B cell (primary cell): ENCODE measurements at regions of chr2 and their contacts with region 1.

Region 1: DNA sequence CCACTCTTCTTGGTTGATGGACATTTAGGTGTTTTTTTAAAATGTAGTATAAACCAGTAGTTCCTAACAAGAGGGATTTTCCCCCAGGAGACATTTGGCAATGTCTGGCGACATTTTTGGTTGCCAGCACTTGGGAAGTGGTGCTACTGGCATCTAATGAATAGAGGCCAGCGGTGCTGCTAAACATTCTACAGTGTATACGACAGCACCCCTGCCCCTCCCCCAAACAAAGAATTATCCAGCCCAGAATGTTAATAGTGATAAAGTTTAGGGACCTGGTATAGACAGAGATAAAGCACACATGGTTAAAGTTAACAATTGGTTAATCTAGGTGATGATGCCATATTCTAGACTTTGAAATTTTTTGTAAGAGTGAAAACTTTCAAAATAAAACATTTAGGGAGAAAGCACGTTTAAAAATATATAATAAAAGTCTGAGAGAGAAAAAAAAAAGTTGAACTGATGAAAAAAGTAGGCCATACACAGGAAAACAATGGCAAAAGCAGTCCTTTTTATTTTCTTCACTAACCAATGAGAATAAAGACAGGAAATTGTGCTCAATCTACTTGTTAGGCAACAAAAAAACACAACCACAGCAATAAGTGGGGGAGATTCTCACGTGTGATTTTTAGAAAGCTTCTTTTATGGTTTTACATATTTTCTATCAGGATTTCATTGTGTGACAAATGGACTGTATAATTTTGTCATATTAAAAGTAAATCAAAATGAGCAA is 14.8 kb downstream of the FBXO48 start:
- DNase-seq: peak; percentile 13
- ATAC-seq: peak; percentile 24
- H3K4me3 ChIP-seq: no peak overlapping the region
- H3K4me3 Mint-ChIP-seq: no peak overlapping the region
- H3K27ac ChIP-seq: no peak overlapping the region
- H3K27ac Mint-ChIP-seq: no peak overlapping the region
- H3K4me1 ChIP-seq: no peaks in the 10 kb centered on the region
- H3K4me1 Mint-ChIP-seq: no peaks in the 10 kb centered on the region
- H3K27me3 ChIP-seq: no peaks in the 10 kb centered on the region
- H3K27me3 Mint-ChIP-seq: no peaks in the 10 kb centered on the region
- CTCF ChIP-seq: no peak

Region 2: DNA sequence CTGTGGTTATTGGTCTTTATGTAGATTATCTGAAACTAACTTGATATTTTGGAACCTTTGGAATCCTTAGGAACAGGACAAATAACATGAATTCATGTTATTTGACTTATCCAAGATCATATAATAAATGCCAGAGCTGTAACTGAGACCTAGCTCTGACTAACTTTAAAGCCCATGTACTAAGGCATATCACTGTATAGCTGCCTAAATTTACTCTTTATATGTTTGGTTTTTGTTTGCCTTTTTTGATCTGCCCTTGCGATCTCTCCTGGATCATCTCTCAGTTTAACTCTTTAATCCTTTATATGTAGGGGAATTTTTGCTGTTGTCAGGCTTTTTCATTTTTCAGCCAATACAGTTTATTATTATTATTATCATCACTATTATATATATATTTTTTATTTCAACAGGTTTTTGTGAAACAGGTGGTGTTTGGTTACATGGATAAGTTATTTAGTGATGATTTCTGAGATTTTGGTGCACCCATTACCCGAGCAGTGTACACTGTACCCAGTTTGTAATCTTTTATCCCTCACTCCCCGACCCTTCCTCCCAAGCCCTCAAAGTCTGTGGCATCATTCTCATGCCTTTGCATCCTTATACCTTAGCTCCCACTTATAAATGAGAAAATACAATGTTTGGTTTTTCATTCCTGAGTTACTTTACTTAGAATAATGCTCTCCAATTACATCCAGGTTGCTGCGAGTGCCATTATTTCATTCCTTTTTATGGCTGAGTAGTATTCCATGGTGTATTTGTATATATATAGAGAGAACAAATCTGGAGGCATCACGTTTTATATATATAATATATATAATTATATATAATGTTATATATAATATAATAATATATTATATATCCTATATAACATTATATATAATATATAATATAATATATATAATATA is 64.0 kb after region 1 on chr2:
- CTCF ChIA-PET with region 1: no interaction called
- POLR2A ChIA-PET with region 1: no interaction called
- intact Hi-C with region 1: loop called (anchors 5 kb)
- DNase-seq: no peak
- ATAC-seq: no peak
- H3K4me3 ChIP-seq: no peak overlapping the region
- H3K4me3 Mint-ChIP-seq: no peak overlapping the region
- H3K27ac ChIP-seq: no peak overlapping the region
- H3K27ac Mint-ChIP-seq: no peak overlapping the region
- H3K4me1 ChIP-seq: no peaks in the 10 kb centered on the region
- H3K4me1 Mint-ChIP-seq: no peaks in the 10 kb centered on the region
- H3K27me3 ChIP-seq: no peaks in the 10 kb centered on the region
- H3K27me3 Mint-ChIP-seq: no peaks in the 10 kb centered on the region
- CTCF ChIP-seq: no peak